ENCODE measurements at regions of chr5 and their contacts with region 1.

Region 1: DNA sequence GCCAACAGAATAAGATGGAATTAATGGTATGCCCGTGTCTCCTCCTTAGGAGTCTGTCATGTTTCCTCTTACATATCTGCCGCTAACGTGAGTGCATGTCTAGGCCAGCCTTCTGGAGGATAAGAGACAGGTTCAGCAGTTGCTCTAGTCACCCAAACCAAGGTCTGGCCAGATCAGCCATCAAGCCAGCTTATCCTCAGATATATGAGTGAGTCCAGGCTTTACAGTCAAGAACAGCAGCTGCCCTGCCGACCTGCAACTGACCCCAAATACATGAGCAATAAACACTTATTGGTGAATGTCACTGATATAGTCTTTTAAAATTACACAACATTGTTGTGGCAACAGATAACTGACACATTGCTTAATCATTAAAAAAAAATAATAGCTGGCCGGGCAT is 123.5 kb downstream of the TSSK1B start:
- DNase-seq: no peak
- H3K4me3 ChIP-seq: no peak overlapping the region
- H3K27ac ChIP-seq: no peak overlapping the region
- H3K4me1 ChIP-seq: peaks cover 0 to 4% (median 0%) of the 10 kb centered on the region in 3 donors
- H3K27me3 ChIP-seq: no peaks in the 10 kb centered on the region
- CTCF ChIP-seq: no peak
- POLR2A ChIP-seq: no peak

Region 2: GRCh38 chr5:113050721-113051382 is 260.4 kb before region 1 on chr5:
- intact Hi-C with region 1: loop called (anchors 10 kb)
- DNase-seq: no peak
- H3K4me3 ChIP-seq: no peak overlapping the region
- H3K27ac ChIP-seq: peak overlapping the region; percentile 47 to 78 (median 58)
- H3K4me1 ChIP-seq: peaks cover 7 to 36% (median 15%) of the 10 kb centered on the region in 3 donors
- H3K27me3 ChIP-seq: no peaks in the 10 kb centered on the region
- CTCF ChIP-seq: no peak
- POLR2A ChIP-seq: no peak

Measured in esophagus squamous epithelium (tissue), 5 donors.